ENCODE measurements at regions of chr18 and their contacts with region 1.

Region 1: DNA sequence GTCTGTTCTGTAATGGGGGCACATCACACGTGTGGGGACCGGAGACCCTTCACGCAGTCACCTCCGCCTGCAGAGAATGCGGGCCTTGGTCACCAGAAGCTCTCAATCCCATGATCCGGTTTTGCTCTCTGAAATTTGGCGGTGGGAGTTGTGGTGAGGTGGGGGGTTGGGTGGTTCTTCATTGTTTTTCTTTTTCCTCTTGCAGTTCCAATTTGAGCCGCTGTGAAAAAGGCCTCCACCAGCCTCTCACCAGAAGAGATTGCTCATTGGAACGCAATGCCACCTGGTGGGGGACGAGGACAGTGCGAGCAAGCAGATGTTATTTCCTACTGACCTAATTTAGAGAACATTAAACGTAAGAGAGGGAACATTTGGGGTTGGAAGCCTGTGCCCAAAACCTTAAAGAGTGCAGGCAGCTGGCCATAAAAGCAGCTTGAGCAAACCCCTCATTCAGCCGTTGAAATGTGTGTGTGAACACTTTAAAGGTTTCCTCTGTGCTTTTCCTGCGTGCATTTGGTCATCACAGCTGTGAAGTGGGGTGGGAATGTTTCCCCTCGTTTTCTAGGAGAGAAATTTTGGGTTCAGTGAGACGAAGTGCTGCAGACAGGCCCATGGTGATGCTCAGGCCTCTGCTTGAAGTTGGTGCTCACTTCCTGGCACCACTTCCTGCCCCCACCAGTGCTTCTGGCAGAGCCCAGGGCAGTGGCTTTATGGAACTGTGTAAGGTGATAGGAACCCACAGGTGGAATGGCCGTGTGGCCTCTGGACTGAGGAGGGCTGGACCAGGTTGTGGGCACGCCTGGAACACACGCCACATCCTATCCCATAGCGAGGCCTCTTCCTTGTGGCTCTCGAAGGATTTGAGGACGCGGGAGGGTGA is 61.7 kb downstream of the ZCCHC2 start:
- H3K4me3 ChIP-seq: no peak overlapping the region
- H3K27ac ChIP-seq: no peak overlapping the region
- H3K4me1 ChIP-seq: peaks cover 5% of the 10 kb centered on the region
- CTCF ChIP-seq: peak; percentile 95

Region 2: GRCh38 chr18:62258616-62259015 is 325.9 kb before region 1 on chr18:
- CTCF ChIA-PET with region 1: no interaction called
- POLR2A ChIA-PET with region 1: no interaction called
- H3K4me3 ChIP-seq: no peak overlapping the region
- H3K27ac ChIP-seq: no peak overlapping the region
- H3K4me1 ChIP-seq: no peaks in the 10 kb centered on the region
- CTCF ChIP-seq: no peak

Region 3: GRCh38 chr18:62425465-62426195 is 158.9 kb before region 1 on chr18:
- CTCF ChIA-PET with region 1: interaction called, 55 read pairs
- POLR2A ChIA-PET with region 1: interaction called, 3 read pairs
- H3K4me3 ChIP-seq: peak overlapping the region; percentile 18; the same call in 1 of the 2 replicates
- H3K27ac ChIP-seq: no peak overlapping the region
- H3K4me1 ChIP-seq: 0 out of 2 replicates have a peak, but pooled peaks cover 5% of the 10 kb centered on the region
- CTCF ChIP-seq: peak; percentile 75

Region 4: GRCh38 chr18:62566199-62566598 is 18.3 kb before region 1 on chr18:
- CTCF ChIA-PET with region 1: interaction called, 50 read pairs
- POLR2A ChIA-PET with region 1: no interaction called
- H3K4me3 ChIP-seq: no peak overlapping the region
- H3K27ac ChIP-seq: no peak overlapping the region
- H3K4me1 ChIP-seq: no peaks in the 10 kb centered on the region
- CTCF ChIP-seq: no peak

Region 5: DNA sequence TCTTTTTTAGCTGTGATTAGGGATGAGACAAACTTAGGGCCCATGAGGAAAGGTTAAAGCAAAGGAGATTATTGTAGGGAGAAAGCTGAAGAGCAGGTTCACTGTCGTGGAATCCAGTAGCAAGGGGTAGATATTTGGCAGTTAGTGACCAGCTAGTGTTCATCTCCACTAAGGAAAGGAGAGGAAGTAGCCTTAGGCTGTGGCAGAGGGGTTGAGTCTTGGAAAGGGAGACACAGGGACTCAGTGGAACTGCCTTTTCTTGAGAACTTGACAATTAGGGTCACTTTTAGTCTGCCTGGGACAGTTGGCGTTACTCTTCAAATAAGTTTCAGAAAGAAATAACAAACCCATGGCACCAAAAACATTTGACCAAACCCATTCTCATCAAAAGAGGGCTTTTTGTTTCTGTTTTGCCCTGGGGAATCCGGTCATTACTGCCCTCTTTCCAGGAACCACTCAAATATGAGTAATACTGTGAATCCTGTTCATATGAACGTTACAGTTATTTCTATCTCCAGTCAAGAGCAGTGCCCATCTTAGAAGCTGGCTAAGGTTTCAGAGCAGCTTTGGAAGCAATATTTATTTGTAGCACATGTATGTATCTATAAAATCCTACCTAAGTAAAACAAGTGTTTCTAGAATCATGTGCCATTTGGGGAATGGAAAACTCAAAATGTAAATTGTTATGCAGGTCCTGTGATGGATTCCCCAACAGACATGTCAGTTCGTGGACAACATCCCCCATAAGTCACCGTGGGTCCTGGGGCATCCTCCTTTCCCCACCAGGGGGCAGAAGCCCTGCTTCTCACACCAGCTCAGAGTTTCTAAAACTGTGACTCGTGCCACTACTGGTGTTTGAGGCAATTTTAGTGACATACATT is 53.6 kb after region 1 on chr18:
- CTCF ChIA-PET with region 1: interaction called, 11 read pairs
- POLR2A ChIA-PET with region 1: no interaction called
- H3K4me3 ChIP-seq: no peak overlapping the region
- H3K27ac ChIP-seq: no peak overlapping the region
- H3K4me1 ChIP-seq: peaks cover 3% of the 10 kb centered on the region; the same call in 1 of the 2 replicates
- CTCF ChIP-seq: 0 out of 2 replicates have a peak, but pooled peaks have one; percentile 20

Region 6: GRCh38 chr18:62982600-62983251 is 398.2 kb after region 1 on chr18:
- CTCF ChIA-PET with region 1: interaction called, 79 read pairs
- POLR2A ChIA-PET with region 1: no interaction called
- H3K4me3 ChIP-seq: no peak overlapping the region
- H3K27ac ChIP-seq: no peak overlapping the region
- H3K4me1 ChIP-seq: no peaks in the 10 kb centered on the region
- CTCF ChIP-seq: peak; percentile 54; the same call in 1 of the 2 replicates

Measured in HEK293 (cell line).